ENCODE measurements at regions of chr9 and their contacts with region 1.

Region 1: DNA sequence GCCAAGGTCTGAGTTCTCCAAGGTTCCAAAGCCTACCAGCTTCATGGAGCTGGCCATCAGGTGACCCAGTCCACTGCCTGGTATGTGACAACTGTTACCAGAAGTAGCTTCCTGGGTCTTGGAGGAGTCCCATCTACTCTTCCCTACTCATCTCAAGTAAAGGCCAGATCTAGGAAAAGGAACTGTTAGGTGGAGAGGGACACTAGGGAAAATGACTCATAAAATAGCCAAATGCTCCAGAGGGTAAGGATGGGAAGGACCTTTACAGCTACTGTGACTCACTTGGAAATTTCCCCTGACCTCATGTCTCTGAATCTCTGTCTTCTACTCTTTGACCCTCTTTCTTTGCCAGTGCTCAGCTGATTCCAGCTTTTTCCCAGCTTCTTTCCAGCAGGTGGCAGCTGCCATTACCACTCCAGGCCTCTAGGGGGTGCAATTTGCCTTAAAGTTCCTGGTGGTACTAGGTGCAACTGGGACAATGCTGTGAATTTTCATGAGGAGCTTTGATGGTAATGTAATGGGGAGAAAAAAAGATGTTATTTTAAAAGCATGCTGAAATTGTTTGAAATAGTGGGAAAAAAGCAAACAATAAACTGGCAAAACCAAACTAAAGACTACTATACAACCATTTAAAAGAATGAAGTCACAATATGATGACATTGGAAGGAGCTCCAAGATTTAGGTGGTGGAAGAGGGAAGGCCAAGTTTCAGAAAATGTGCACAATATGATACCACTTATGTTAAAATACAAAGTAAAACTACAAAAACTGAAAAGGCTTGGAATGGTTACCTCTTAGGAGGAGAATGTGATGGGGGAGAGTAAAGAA is 27.1 kb upstream of the MYORG start:
- DNase-seq: no peak
- ATAC-seq: peak; percentile 62; the same call in 2 of the 3 replicates
- H3K4me3 ChIP-seq: no peak overlapping the region
- H3K27ac ChIP-seq: no peak overlapping the region
- H3K4me1 ChIP-seq: no peaks in the 10 kb centered on the region
- H3K27me3 ChIP-seq: peaks cover 2 to 3% of the 10 kb centered on the region in 2 experiments; a peak in 3 of 4 replicates
- CTCF ChIP-seq: peak; percentile 90 to 99 (median 96)
- EP300 ChIP-seq: no peak
- POLR2A ChIP-seq: no peak
- RAD21 ChIP-seq: peak; percentile 79

Region 2: GRCh38 chr9:34252670-34253459 is 150.9 kb before region 1 on chr9:
- CTCF ChIA-PET with region 1: no interaction called
- POLR2A ChIA-PET with region 1: no interaction called
- RAD21 ChIA-PET with region 1: no interaction called
- SMC1A ChIA-PET with region 1: no interaction called
- in situ Hi-C with region 1: no loop called
- intact Hi-C with region 1: no loop called
- DNase-seq: no peak
- ATAC-seq: peak; percentile 94
- H3K4me3 ChIP-seq: no peak overlapping the region
- H3K27ac ChIP-seq: no peak overlapping the region
- H3K4me1 ChIP-seq: no peaks in the 10 kb centered on the region
- H3K27me3 ChIP-seq: no peaks in the 10 kb centered on the region
- CTCF ChIP-seq: peak; percentile 78 to 96 (median 95)
- EP300 ChIP-seq: no peak
- POLR2A ChIP-seq: peak; percentile 15; the same call in 1 of the 2 replicates
- RAD21 ChIP-seq: peak; percentile 60

Region 3: DNA sequence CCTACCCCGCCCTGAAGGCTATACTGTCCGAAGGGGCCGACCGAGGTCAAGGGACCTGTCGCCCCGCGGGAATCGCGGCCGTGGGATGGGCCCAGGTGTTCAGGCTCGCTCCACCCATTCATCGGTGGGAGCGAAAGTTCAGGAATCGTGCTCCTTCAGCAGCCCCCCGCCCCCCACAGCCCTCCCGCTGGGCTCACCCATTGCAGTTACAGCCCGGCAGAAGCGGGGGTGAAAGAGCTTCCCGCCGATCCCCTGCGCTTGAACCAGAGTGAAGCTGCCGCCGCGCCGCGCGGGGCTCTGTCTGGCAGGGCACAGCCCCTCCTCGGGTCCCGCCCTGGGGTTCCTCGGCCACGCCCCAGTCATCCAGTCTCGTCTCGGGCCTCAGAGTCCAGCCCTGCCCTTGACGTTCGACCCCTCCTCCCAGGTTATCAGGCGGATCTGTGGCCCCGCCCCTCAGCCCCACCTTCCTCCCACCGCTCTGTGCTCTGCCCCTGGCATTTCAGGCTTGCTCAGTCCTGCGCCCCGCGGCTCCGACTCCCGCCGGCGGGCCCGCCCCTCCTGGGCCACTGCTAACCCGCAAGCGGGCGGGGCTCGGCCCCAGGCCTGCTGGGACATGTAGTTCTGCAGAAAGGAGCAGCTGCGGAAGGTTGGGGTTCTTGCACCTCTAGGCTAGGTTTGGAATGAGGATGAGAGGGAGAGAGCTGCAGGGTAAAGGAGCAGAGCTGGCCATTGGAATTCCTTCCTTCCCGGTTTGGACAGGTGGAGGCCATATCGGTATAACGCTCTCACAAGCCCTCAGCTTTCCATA is 27.0 kb before region 1 on chr9 and contains the start of gene MYORG:
- CTCF ChIA-PET with region 1: interaction called, 15 read pairs
- POLR2A ChIA-PET with region 1: no interaction called
- RAD21 ChIA-PET with region 1: no interaction called
- SMC1A ChIA-PET with region 1: interaction called, 3 read pairs
- in situ Hi-C with region 1: no loop called
- intact Hi-C with region 1: no loop called
- DNase-seq: peak; percentile 82
- ATAC-seq: peak; percentile 88
- H3K4me3 ChIP-seq: peak within 1 kb of the TSS; percentile 68
- H3K27ac ChIP-seq: no peak within 1 kb of the TSS
- H3K4me1 ChIP-seq: peaks cover 21% of the 10 kb centered on the region
- H3K27me3 ChIP-seq: peaks cover 5 to 9% of the 10 kb centered on the region in 2 experiments; a peak in 3 of 4 replicates
- CTCF ChIP-seq: no peak
- EP300 ChIP-seq: no peak
- POLR2A ChIP-seq: peak; percentile 65
- RAD21 ChIP-seq: no peak
- polyA plus RNA-seq, gene MYORG: 0.06 to 0.07 TPM

Region 4: DNA sequence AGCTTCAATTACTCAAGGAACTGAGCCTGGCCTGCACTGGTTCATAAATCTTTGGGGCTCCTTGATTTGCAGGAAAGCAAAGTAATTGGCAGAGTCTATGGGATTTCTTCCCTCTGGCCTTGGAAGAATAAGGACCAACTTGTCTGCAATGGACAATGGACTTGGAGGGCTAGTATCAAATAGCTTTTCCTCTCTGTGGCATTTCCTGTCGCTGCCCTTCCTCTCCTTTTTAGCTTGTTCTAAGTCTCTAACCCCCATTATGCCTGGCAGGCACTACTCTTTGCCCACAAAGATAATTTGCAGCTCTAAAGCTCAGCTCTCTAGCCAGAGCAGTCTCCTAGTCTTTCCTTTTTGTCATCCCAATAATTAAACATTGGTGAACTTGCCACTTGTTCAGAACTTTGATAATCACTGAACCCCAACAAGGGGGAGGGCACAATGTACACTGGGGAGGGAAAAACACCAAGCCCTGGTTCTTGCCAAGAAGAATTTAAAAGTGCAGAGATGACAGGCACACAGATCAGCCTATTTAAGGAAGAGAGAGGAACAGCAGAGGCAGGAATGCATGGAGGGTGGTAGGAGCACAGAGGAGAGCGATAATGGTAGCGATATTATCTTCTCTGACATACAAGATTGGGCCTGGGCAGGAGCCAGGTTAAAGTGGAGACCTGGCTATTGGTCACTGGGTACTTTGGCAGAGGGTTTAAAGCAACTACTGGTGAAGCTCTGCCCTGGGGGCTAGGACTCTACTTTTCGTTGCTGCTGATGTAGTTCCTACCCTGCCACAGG is 16.1 kb after region 1 on chr9:
- CTCF ChIA-PET with region 1: interaction called, 30 read pairs
- POLR2A ChIA-PET with region 1: no interaction called
- RAD21 ChIA-PET with region 1: no interaction called
- SMC1A ChIA-PET with region 1: no interaction called
- in situ Hi-C with region 1: no loop called
- intact Hi-C with region 1: no loop called
- DNase-seq: no peak
- ATAC-seq: no peak
- H3K4me3 ChIP-seq: no peak overlapping the region
- H3K27ac ChIP-seq: no peak overlapping the region
- H3K4me1 ChIP-seq: no peaks in the 10 kb centered on the region
- H3K27me3 ChIP-seq: no peaks in the 10 kb centered on the region; a peak in 1 of 4 replicates
- CTCF ChIP-seq: no peak
- EP300 ChIP-seq: no peak
- POLR2A ChIP-seq: no peak
- RAD21 ChIP-seq: no peak

Region 5: GRCh38 chr9:34463098-34463900 is 59.5 kb after region 1 on chr9:
- CTCF ChIA-PET with region 1: no interaction called
- POLR2A ChIA-PET with region 1: no interaction called
- RAD21 ChIA-PET with region 1: no interaction called
- SMC1A ChIA-PET with region 1: no interaction called
- in situ Hi-C with region 1: no loop called
- intact Hi-C with region 1: no loop called
- DNase-seq: no peak
- ATAC-seq: no peak
- H3K4me3 ChIP-seq: no peak overlapping the region
- H3K27ac ChIP-seq: no peak overlapping the region
- H3K4me1 ChIP-seq: no peaks in the 10 kb centered on the region
- H3K27me3 ChIP-seq: peaks cover 0 to 11% of the 10 kb centered on the region in 2 experiments; a peak in 3 of 4 replicates
- CTCF ChIP-seq: no peak
- EP300 ChIP-seq: no peak
- POLR2A ChIP-seq: no peak
- RAD21 ChIP-seq: no peak

Region 6: GRCh38 chr9:34500623-34501267 is 97.0 kb after region 1 on chr9:
- CTCF ChIA-PET with region 1: interaction called, 38 read pairs
- POLR2A ChIA-PET with region 1: no interaction called
- RAD21 ChIA-PET with region 1: interaction called, 3 read pairs
- SMC1A ChIA-PET with region 1: interaction called, 4 read pairs
- in situ Hi-C with region 1: no loop called
- intact Hi-C with region 1: loop called (anchors 2 kb)
- DNase-seq: no peak
- ATAC-seq: peak; percentile 89
- H3K4me3 ChIP-seq: no peak overlapping the region
- H3K27ac ChIP-seq: no peak overlapping the region
- H3K4me1 ChIP-seq: no peaks in the 10 kb centered on the region
- H3K27me3 ChIP-seq: peaks cover 6 to 8% of the 10 kb centered on the region in 2 experiments
- CTCF ChIP-seq: peak; percentile 82 to 98 (median 94)
- EP300 ChIP-seq: no peak
- POLR2A ChIP-seq: no peak
- RAD21 ChIP-seq: peak; percentile 76

Region 7: GRCh38 chr9:34546834-34547827 is 143.4 kb after region 1 on chr9:
- CTCF ChIA-PET with region 1: no interaction called
- POLR2A ChIA-PET with region 1: no interaction called
- RAD21 ChIA-PET with region 1: no interaction called
- SMC1A ChIA-PET with region 1: interaction called, 3 read pairs
- in situ Hi-C with region 1: no loop called
- intact Hi-C with region 1: loop called (anchors 1 kb)
- DNase-seq: no peak
- ATAC-seq: peak; percentile 85
- H3K4me3 ChIP-seq: no peak overlapping the region
- H3K27ac ChIP-seq: no peak overlapping the region
- H3K4me1 ChIP-seq: no peaks in the 10 kb centered on the region
- H3K27me3 ChIP-seq: peaks cover 3 to 8% of the 10 kb centered on the region in 2 experiments
- CTCF ChIP-seq: peak; percentile 48 to 73 (median 70)
- EP300 ChIP-seq: no peak
- POLR2A ChIP-seq: no peak
- RAD21 ChIP-seq: peak; percentile 36

Region 8: DNA sequence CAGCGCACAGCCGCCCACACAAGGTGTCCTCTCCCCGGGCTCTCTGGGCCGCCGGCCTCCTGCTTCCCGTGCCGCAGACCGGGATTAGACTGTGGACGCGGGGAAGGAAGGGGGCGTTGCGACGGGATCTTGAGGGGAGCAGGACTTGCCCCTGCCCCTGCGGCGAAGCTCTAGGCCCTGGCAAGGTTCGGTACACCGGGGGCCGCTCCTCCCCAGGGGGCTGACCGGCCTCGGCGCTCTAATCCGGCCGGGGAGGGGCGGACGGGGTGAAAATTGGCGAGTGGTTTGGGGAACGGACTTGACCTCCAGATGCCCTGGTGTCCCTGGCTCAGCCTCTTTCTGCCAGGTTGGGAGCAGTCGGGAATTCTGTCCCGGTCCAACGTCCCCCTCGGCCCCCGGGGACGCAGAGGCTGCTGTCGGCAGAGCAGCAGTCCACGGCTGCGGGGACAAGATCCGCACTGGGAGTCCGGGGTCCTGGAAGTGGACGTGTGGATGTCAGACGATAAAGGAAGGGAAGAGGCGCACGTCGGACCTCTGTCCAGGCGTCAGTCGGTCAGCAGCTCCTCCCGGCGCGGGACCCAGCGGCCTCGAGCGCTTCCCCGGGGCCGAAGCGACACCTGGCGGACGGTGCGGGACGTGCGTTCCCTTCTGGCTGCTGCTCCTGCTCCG is 187.6 kb after region 1 on chr9:
- CTCF ChIA-PET with region 1: interaction called, 32 read pairs
- POLR2A ChIA-PET with region 1: no interaction called
- RAD21 ChIA-PET with region 1: interaction called, 7 read pairs
- SMC1A ChIA-PET with region 1: no interaction called
- in situ Hi-C with region 1: no loop called
- intact Hi-C with region 1: loop called (anchors 2 kb)
- DNase-seq: no peak
- ATAC-seq: peak; percentile 97
- H3K4me3 ChIP-seq: no peak overlapping the region
- H3K27ac ChIP-seq: no peak overlapping the region
- H3K4me1 ChIP-seq: peaks cover 2% of the 10 kb centered on the region; the same call in 1 of the 2 replicates
- H3K27me3 ChIP-seq: peaks cover 28 to 50% of the 10 kb centered on the region in 2 experiments
- CTCF ChIP-seq: peak; percentile 75 to 94 (median 87)
- EP300 ChIP-seq: no peak
- POLR2A ChIP-seq: no peak
- RAD21 ChIP-seq: peak; percentile 66

Measured in GM12878 (cell line).